Aorta (tissue), 5 donors: ENCODE measurements at regions of chr6 and their contacts with region 1.

Region 1: DNA sequence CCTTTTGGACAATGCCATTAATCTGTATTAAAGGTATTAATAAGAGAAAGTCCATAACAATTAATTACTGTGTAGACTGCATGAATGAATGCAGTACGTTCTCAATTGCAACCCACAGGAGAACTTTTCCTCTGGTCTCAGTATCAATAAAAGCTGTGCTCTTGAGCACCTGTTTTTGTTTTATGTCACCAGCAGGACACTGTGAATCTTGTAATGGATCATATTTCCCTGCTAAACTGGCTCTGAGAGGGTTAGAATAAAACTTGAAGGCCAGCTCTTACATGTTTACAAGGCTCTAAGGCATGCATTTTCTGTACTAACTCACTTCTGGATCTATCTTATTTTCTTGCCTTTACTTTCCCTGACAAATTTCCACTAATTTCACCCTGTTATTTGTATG is 214.3 kb upstream of the PLN start:
- DNase-seq: no peak
- ATAC-seq: no peak
- H3K4me3 ChIP-seq: no peak overlapping the region
- H3K27ac ChIP-seq: no peak overlapping the region
- H3K4me1 ChIP-seq: peaks cover 0 to 3% of the 10 kb centered on the region in 2 donors
- H3K27me3 ChIP-seq: no peaks in the 10 kb centered on the region

Region 2: DNA sequence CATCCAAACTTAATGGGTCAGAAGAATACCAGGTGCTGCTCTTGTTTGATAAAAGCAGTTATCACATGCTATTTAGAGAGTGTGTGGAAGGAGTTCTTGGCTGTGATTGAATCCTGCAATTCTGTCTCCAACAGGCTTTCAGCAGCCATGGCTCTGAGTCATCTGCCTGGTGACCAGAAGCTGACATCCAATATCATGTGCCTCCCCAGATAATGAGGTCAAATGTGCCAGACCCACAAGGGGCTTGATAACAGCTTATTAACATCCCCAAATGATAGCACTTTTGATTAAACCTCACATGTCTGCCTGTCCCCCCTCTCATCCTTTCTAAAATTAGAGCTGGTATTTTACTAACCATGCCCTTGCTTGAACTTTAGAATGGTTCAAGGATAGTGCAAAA is 38.6 kb after region 1 on chr6:
- intact Hi-C with region 1: loop called (anchors 5 kb)
- DNase-seq: no peak
- ATAC-seq: peak; percentile 54
- H3K4me3 ChIP-seq: no peak overlapping the region
- H3K27ac ChIP-seq: no peak overlapping the region
- H3K4me1 ChIP-seq: no peaks in the 10 kb centered on the region
- H3K27me3 ChIP-seq: no peaks in the 10 kb centered on the region

Region 3: GRCh38 chr6:118377711-118378414 is 44.1 kb after region 1 on chr6:
- intact Hi-C with region 1: loop called (anchors 5 kb)
- DNase-seq: no peak
- ATAC-seq: no peak
- H3K4me3 ChIP-seq: no peak overlapping the region
- H3K27ac ChIP-seq: no peak overlapping the region
- H3K4me1 ChIP-seq: no peaks in the 10 kb centered on the region
- H3K27me3 ChIP-seq: no peaks in the 10 kb centered on the region

Region 4: DNA sequence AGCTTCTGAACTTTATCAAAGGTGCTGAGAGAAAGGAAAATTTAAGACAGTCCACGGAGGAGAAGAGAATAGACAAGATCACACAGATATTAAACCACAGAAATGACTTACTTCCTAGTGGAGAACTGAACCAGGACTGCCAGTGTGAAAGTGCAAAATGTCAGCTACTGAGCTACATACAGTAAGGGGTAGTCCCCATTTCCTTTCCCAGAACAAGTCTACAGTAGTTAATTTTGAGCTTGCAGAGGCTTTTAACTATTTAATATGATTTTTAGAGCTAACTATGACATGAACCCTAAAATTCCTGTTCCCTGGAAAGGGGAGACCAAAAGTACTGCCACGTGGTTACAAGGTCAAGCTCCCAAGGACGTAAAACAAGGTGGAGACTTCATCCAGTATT is 272.5 kb after region 1 on chr6:
- intact Hi-C with region 1: no loop called
- DNase-seq: no peak
- ATAC-seq: no peak
- H3K4me3 ChIP-seq: no peak overlapping the region
- H3K27ac ChIP-seq: no peak overlapping the region
- H3K4me1 ChIP-seq: peaks cover 0 to 3% of the 10 kb centered on the region in 2 donors
- H3K27me3 ChIP-seq: no peaks in the 10 kb centered on the region